A673 (cell line): ENCODE measurements at regions of chr10 and their contacts with region 1.

Region 1: DNA sequence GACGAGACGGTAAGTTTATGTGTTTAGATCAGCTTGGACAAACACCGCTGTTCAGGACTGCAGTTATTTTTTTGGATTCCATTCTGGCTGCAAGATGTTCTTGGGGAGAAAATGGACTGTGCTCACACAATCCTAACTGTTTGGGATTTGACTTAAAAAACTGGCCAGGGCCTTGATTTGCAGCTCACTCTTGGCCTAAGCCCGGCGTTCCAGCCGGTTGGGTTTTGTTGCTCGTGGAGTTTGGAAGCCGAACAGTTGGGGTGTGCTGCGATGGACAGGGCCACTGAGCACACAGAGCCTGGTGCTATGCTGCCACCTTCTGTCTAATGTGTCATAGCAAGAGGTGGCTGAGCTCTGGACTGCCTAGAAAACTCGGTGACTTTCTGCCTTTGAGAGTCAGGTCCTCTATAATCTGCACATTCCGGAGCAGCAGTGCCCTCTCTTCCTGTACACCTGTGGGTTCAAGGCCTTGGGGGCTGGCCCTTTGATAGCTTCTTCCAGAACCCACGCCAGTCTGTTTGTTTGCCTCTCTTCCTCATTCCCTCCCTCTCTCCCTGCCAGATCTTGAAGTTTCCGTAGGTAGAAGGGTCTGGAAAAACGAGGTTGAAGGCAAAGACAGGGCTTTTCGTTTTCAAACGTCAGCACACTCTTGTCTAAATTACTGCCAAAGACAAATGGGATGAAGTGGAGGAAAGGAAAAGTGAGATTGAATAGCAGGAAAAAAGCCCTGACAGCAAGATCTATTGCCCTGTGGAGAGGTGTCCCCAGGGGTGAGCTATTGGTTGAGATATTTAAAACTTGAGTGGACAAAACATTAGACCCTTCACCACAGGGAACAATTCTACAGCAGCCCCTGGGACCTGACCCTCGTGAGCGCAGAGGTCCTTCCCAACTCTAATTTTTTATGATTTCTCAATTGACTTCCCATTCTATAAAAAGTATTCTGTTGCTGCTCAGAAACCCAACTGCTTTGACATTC is 167.5 kb upstream of the HABP2 start:
- DNase-seq: peak; percentile 88
- H3K4me3 ChIP-seq: no peak overlapping the region
- H3K27ac ChIP-seq: no peak overlapping the region
- H3K4me1 ChIP-seq: no peaks in the 10 kb centered on the region
- H3K27me3 ChIP-seq: no peaks in the 10 kb centered on the region
- CTCF ChIP-seq: peak; percentile 87

Region 2: DNA sequence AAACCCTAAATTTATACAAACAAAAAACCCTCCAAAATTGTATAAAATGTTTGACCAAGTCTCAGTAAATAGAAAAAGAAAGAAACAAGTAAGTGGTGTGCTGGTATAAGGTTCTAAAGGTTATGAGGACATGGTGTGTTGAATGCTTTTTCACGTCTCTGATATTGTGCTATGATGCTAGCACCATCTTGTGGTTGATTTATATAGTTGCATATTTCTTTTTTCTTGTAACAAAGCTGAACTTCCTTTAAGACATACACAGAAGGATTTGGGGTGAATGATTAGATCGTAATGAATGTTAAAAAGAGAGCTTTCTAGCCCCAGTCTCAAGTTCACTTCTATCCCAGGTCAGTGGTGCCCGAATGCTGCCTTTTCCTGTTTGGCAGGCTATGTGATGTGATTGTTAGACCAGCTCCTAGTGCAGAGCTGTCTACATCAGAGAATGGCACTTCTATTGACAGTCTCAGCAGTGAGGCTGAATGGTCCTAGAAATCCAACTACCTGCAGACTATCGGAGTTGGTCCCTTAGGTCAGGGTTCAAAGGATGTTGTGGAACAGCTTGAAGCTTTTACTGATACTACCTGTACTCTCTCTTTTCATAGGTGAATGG is 913.3 kb before region 1 on chr10:
- CTCF ChIA-PET with region 1: interaction called, 5 read pairs
- POLR2A ChIA-PET with region 1: no interaction called
- intact Hi-C with region 1: loop called (anchors 1 kb)
- DNase-seq: peak; percentile 70
- H3K4me3 ChIP-seq: no peak overlapping the region
- H3K27ac ChIP-seq: no peak overlapping the region
- H3K4me1 ChIP-seq: peaks cover 6% of the 10 kb centered on the region
- H3K27me3 ChIP-seq: no peaks in the 10 kb centered on the region
- CTCF ChIP-seq: peak; percentile 78

Region 3: DNA sequence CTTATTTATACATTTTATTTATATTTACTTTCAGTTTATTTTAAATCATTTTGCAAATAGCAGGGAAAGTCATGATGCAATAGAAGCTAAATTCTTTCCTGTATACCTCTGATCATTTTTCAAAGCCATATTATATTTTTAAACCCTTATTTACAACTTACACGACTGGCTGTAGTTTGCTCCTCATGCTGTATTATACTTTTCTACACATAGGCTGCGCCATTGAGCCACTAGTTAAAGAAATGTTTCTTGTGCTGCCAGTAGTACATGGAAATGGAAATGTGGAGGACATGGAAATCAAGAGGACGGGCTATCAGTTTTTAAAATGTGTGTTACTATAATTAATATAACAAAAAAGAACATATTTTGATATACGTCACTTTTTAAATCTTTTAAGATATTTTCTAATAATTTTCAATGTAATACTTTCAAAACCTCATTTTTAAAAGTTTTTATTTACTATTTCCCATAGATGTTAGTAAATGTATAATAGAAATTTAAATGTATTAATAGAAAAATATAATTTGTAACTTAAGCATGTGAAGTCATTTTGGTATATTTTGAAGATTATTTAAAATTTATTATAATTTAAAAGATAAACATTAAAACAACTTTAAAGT is 819.8 kb before region 1 on chr10:
- CTCF ChIA-PET with region 1: interaction called, 4 read pairs
- POLR2A ChIA-PET with region 1: no interaction called
- intact Hi-C with region 1: loop called (anchors 2 kb)
- DNase-seq: peak; percentile 79
- H3K4me3 ChIP-seq: no peak overlapping the region
- H3K27ac ChIP-seq: no peak overlapping the region
- H3K4me1 ChIP-seq: no peaks in the 10 kb centered on the region
- H3K27me3 ChIP-seq: no peaks in the 10 kb centered on the region
- CTCF ChIP-seq: peak; percentile 78

Region 4: GRCh38 chr10:112721080-112721698 is 664.1 kb before region 1 on chr10:
- CTCF ChIA-PET with region 1: interaction called, 3 read pairs
- POLR2A ChIA-PET with region 1: no interaction called
- intact Hi-C with region 1: loop called (anchors 10 kb)
- DNase-seq: peak; percentile 67
- H3K4me3 ChIP-seq: no peak overlapping the region
- H3K27ac ChIP-seq: no peak overlapping the region
- H3K4me1 ChIP-seq: peaks cover 4% of the 10 kb centered on the region
- H3K27me3 ChIP-seq: no peaks in the 10 kb centered on the region
- CTCF ChIP-seq: peak; percentile 76

Region 5: GRCh38 chr10:113045147-113046055 is 339.9 kb before region 1 on chr10:
- CTCF ChIA-PET with region 1: no interaction called
- POLR2A ChIA-PET with region 1: no interaction called
- intact Hi-C with region 1: no loop called
- DNase-seq: no peak
- H3K4me3 ChIP-seq: no peak overlapping the region
- H3K27ac ChIP-seq: no peak overlapping the region
- H3K4me1 ChIP-seq: peaks cover 24% of the 10 kb centered on the region
- H3K27me3 ChIP-seq: no peaks in the 10 kb centered on the region
- CTCF ChIP-seq: no peak

Region 6: DNA sequence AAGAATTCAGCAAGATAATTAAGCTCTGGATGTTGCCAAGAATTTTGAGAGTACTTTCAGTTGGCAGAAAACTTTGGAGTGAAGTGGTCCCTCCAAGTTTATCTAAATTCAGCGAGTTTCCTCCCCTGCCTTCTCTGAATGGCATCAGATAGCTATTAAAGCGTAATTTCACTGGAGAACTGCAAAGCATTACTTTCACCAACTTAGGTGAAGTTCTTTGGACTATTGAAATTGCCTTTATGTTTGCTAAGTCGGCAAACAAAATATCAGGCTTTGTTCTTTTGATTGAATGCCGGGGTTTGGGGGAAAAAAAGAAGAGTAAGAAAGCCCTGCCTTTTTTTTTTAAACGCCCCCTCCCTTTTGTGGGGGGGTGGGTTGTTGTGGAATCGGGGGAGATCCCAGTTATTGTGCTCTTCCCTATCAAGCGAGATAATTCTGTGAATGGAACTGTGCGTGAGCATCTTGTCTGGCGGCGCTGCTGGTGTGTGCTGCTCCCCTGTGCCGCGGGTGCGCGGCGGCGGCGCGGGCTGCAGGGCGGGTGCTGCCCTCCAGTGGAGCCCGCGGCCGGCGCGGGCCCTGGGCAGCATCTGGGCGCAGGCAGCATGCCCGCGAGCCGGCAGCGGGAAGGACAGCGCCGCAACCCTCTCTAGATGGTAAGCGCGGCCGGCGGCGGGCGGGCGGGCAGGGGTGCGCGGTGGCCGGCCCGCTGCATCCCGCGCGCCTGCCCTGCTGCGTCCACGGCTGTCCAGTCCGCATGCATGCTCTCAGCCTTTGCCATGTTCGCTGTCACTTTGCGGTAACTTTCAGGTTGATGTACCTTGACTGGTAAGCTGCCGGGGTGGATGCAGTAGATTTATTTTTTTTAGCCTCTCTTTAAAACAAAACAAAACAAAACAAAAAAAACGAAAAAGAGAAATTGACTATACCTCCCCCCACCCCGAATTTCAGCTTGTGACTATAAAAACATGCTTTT is 258.8 kb before region 1 on chr10:
- CTCF ChIA-PET with region 1: interaction called, 6 read pairs
- POLR2A ChIA-PET with region 1: no interaction called
- intact Hi-C with region 1: loop called (anchors 5 kb)
- DNase-seq: peak; percentile 87
- H3K4me3 ChIP-seq: peak overlapping the region; percentile 34
- H3K27ac ChIP-seq: no peak overlapping the region
- H3K4me1 ChIP-seq: peaks cover 18% of the 10 kb centered on the region
- H3K27me3 ChIP-seq: peaks cover 9% of the 10 kb centered on the region
- CTCF ChIP-seq: peak; percentile 57

Region 7: DNA sequence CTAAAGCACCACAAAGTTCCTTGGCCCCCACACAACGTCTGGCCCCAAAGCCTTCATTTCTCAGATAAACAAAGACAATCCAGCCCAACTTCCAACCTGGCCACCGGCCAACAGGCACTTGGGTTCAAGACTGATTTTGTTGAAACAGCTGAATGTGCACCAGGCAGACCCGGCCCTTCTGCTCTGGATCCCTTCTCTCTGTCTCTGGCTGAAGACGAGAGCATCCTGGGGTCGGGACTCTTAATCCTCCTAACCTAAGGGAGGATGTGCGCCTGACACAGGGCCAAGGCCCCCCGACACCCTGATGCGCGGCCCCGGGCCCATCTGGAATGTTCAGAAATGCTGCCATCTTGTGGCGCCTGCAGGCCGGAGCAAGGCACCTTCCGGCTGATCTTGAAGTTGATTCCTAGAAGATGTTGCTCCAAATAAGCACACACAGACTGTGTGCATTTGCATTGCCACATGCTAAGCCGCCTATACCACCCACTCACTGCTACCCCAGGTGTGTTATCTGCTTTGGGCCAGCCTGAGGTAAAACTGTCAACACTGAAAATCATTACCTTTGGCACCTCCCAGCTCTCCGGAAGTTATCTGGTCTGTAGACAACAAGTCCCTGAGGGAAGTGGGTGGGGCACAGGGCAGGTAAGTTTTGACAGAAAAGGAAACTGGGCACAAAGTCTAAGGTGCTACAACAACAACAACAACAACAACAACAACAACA is 69.2 kb after region 1 on chr10:
- CTCF ChIA-PET with region 1: interaction called, 7 read pairs
- POLR2A ChIA-PET with region 1: no interaction called
- intact Hi-C with region 1: loop called (anchors 2 kb)
- DNase-seq: peak; percentile 51
- H3K4me3 ChIP-seq: no peak overlapping the region
- H3K27ac ChIP-seq: no peak overlapping the region
- H3K4me1 ChIP-seq: no peaks in the 10 kb centered on the region
- H3K27me3 ChIP-seq: peaks cover 26% of the 10 kb centered on the region
- CTCF ChIP-seq: peak; percentile 89

Region 8: DNA sequence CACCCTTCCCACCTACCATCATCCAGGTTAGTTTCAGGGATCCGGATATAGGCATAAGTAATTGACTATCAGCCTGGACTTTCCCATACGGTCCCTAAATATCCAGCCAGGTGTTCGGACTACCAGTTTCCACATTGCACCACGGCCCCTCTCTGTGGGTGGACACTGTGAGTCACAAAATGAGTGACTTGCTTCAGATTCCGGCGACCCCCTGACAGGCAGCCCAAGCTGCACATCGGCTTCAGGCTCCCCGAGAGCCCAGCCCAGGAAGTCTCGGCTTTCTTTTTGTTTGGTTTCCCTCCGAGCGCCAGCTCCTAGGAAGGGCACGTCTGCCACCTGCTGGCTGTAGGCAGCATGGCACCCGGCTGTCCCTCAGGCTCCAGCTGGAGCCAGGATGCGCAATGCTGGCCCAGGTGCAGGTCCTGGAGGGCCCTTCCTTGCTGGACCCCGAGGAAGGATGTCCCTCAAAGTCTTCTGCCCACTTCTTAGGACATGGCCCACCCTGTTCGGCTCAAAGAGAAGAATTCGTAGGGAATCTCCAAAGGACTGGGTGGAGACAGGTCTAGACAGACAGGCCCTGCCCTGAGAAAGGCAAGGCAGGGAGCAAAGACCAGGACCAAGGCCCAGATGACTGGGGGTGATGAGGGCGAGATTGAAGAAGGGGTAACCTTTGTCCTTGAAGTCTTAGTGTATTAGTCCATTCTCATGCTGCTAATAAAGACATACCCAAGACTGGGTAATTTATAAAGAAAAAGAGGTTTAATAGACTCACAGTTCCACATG is 178.2 kb after region 1 on chr10:
- CTCF ChIA-PET with region 1: interaction called, 5 read pairs
- POLR2A ChIA-PET with region 1: no interaction called
- intact Hi-C with region 1: loop called (anchors 10 kb)
- DNase-seq: peak; percentile 85
- H3K4me3 ChIP-seq: peak overlapping the region; percentile 33
- H3K27ac ChIP-seq: no peak overlapping the region
- H3K4me1 ChIP-seq: no peaks in the 10 kb centered on the region
- H3K27me3 ChIP-seq: no peaks in the 10 kb centered on the region
- CTCF ChIP-seq: peak; percentile 98

Region 9: DNA sequence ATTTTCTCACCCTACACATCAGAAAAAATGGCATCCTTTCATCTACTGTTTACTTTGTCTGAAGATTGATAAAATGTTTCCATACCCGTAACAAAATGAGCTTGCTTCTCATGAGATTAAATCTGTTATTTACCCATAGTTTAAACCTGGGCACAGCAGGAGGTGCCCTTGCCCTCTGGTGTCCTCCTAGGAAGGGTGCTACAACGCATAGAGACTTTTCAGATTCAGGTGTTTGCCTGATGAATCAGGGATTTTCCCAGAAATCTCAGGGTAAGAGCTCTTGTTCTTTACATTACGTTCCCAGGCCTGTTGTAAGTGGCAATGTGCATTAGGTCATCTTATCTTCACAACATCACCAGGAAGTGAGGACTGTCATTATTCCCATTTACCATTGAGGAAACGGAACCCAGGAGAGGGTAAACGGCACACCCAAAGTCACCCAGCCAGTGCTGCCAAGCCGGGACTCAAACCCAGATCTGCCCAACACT is 542.1 kb after region 1 on chr10:
- CTCF ChIA-PET with region 1: no interaction called
- POLR2A ChIA-PET with region 1: no interaction called
- intact Hi-C with region 1: no loop called
- DNase-seq: no peak
- H3K4me3 ChIP-seq: no peak overlapping the region
- H3K27ac ChIP-seq: no peak overlapping the region
- H3K4me1 ChIP-seq: no peaks in the 10 kb centered on the region
- H3K27me3 ChIP-seq: no peaks in the 10 kb centered on the region
- CTCF ChIP-seq: no peak

Region 10: GRCh38 chr10:114103284-114103683 is 718.0 kb after region 1 on chr10:
- CTCF ChIA-PET with region 1: no interaction called
- POLR2A ChIA-PET with region 1: no interaction called
- intact Hi-C with region 1: no loop called
- DNase-seq: peak; percentile 90
- H3K4me3 ChIP-seq: no peak overlapping the region
- H3K27ac ChIP-seq: no peak overlapping the region
- H3K4me1 ChIP-seq: peaks cover 26% of the 10 kb centered on the region
- H3K27me3 ChIP-seq: no peaks in the 10 kb centered on the region
- CTCF ChIP-seq: peak; percentile 64